ENCODE measurements at regions of chr9 and their contacts with region 1.

Region 1: GRCh38 chr9:94903961-94904421 is 177.5 kb downstream of the AOPEP start:
- DNase-seq: no peak
- ATAC-seq: no peak
- H3K4me3 ChIP-seq: no peak overlapping the region
- H3K27ac ChIP-seq: peak overlapping the region; percentile 71
- H3K4me1 ChIP-seq: peaks cover 33% of the 10 kb centered on the region
- H3K27me3 ChIP-seq: no peaks in the 10 kb centered on the region
- CTCF ChIP-seq: no peak

Region 2: GRCh38 chr9:94888775-94889174 is 15.2 kb before region 1 on chr9:
- CTCF ChIA-PET with region 1: no interaction called
- POLR2A ChIA-PET with region 1: no interaction called
- in situ Hi-C with region 1: no loop called
- intact Hi-C with region 1: no loop called
- DNase-seq: no peak
- ATAC-seq: no peak
- H3K4me3 ChIP-seq: no peak overlapping the region
- H3K27ac ChIP-seq: peak overlapping the region; percentile 76; the same call in 1 of the 2 replicates
- H3K4me1 ChIP-seq: peaks cover 18% of the 10 kb centered on the region
- H3K27me3 ChIP-seq: no peaks in the 10 kb centered on the region
- CTCF ChIP-seq: no peak

Region 3: DNA sequence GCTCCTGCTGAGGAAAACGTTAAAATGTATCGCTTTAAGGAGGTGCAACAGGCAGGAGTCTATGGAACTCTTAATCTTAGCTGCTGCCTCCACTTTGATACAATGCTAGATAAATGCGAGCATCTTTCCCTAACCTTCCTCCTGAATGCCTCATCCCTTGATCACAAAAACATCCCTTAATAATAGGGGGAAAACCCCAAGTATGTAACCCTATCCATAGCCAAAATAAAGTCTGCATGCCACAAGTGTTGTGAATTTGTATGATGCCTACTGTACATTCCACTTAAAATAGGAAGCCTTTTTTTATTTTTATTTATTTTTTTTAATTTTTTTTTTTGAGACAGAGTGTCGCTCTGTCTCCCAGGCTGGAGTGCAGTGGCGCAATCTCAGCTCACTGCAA is 29.4 kb after region 1 on chr9:
- CTCF ChIA-PET with region 1: no interaction called
- POLR2A ChIA-PET with region 1: interaction called, 10 read pairs
- in situ Hi-C with region 1: no loop called
- intact Hi-C with region 1: no loop called
- DNase-seq: no peak
- ATAC-seq: no peak
- H3K4me3 ChIP-seq: no peak overlapping the region
- H3K27ac ChIP-seq: peak overlapping the region; percentile 58; the same call in 1 of the 2 replicates
- H3K4me1 ChIP-seq: peaks cover 19% of the 10 kb centered on the region
- H3K27me3 ChIP-seq: no peaks in the 10 kb centered on the region
- CTCF ChIP-seq: no peak